Activated CD4-positive, alpha-beta T cell treated with anti-CD3 and anti-CD28 coated beads, Interleukin-2, amount 10 ng/mL, durations not matched to agents 24 days and 14 days (primary cell): ENCODE measurements at regions of chr1 and their contacts with region 1.

Region 1: GRCh38 chr1:151189638-151190445 is at the start of gene VPS72:
- DNase-seq: peak; percentile 96
- H3K4me3 Mint-ChIP-seq: peak within 1 kb of the TSS; percentile 97
- H3K27ac Mint-ChIP-seq: peak within 1 kb of the TSS; percentile 93
- H3K4me1 Mint-ChIP-seq: peaks cover 26% of the 10 kb centered on the region
- H3K27me3 Mint-ChIP-seq: peaks cover 6% of the 10 kb centered on the region
- total RNA-seq, gene VPS72: 86.7 and 92.3 TPM in 2 replicates

Region 2: GRCh38 chr1:151165738-151166505 is 23.9 kb before region 1 on chr1 and contains the starts of genes LYSMD1 and SCNM1:
- intact Hi-C with region 1: loop called (anchors 1 kb)
- DNase-seq: peak; percentile 99
- H3K4me3 Mint-ChIP-seq: peak within 1 kb of the TSS; percentile 97
- H3K27ac Mint-ChIP-seq: peak within 1 kb of the TSS; percentile 91
- H3K4me1 Mint-ChIP-seq: peaks cover 41% of the 10 kb centered on the region
- H3K27me3 Mint-ChIP-seq: no peaks in the 10 kb centered on the region
- total RNA-seq, gene LYSMD1: 4.7 and 5.2 TPM in 2 replicates
- total RNA-seq, gene SCNM1: 96.7 and 100 TPM in 2 replicates

Region 3: GRCh38 chr1:151254217-151255213 is 64.7 kb after region 1 on chr1 and contains the start of gene PSMD4:
- intact Hi-C with region 1: loop called (anchors 1 kb)
- DNase-seq: peak; percentile 98
- H3K4me3 Mint-ChIP-seq: peak within 1 kb of the TSS; percentile 90
- H3K27ac Mint-ChIP-seq: peak within 1 kb of the TSS; percentile 94
- H3K4me1 Mint-ChIP-seq: peaks cover 25% of the 10 kb centered on the region
- H3K27me3 Mint-ChIP-seq: no peaks in the 10 kb centered on the region
- total RNA-seq, gene PSMD4: 288 and 304 TPM in 2 replicates

Region 4: DNA sequence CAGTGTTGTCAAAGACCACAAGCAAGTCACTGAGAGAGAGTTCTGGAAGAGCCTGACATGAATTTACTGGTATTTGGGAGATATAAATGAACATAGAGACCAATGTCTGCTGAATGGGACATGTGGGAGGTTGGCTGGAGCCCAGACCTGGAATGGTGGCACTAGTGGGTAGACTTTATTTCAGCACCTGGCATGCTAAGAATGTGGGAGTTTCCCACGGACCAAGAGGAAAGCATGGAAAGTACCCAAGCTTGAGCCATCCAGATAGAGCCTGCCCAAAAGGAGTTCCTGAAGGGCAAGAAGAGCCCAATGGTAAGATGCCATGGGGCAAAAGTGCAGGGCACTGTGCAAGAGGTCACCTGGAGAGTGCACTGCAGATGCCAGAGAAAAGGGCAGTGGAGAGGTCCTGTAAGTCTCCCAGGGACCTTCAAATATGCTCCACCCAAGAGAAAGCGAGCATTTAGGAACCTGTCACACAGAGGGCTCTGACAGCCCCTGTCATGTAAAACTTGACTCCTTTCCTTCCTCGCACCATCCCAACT is 84.2 kb after region 1 on chr1:
- intact Hi-C with region 1: no loop called
- DNase-seq: no peak
- H3K4me3 Mint-ChIP-seq: no peak overlapping the region
- H3K27ac Mint-ChIP-seq: no peak overlapping the region
- H3K4me1 Mint-ChIP-seq: peaks cover 16% of the 10 kb centered on the region
- H3K27me3 Mint-ChIP-seq: no peaks in the 10 kb centered on the region